ENCODE measurements at regions of chr11 and their contacts with region 1.

Region 1: DNA sequence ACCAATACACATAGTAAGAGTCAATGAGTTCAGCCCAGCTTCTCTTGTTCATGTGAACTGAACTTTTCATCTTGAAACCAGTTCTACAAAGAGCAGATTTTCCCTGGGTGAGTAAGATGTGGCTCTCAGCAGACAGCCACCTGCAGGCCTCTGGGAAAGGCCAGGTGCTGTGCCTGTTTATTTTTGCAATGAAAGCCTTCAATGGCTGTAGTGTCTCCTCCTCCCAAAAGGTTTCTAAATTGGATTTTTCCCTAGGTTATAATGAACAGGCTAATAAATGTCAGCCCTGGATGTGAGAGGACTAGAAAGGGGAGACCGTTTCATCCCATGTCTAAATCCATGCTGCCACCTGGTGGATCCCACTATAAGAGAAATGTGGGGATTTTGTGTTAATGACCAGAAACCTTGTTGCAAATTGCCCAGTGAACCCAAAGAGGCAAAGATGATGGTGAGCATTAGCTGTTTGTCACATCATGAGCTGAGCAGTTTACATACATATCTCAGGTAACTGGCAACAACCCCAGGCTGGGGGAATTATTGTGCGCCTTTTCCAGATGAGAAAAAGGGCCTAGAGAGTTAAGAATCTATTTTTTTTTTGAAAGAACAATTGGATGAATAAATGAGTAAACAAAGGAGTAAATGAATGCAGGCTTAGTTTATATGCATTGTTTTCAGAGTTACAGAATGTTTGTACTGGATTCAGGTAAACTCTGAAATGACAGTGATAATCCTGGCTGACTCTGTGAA is 12.7 kb downstream of the C11orf91 start:
- DNase-seq: no peak
- H3K4me3 ChIP-seq: no peak overlapping the region
- H3K27me3 ChIP-seq: no peaks in the 10 kb centered on the region
- CTCF ChIP-seq: peak; percentile 69

Region 2: GRCh38 chr11:33362051-33362910 is 325.6 kb before region 1 on chr11:
- CTCF ChIA-PET with region 1: interaction called, 64 read pairs
- POLR2A ChIA-PET with region 1: no interaction called
- DNase-seq: peak; percentile 14
- H3K4me3 ChIP-seq: no peak overlapping the region
- H3K27me3 ChIP-seq: no peaks in the 10 kb centered on the region
- CTCF ChIP-seq: peak; percentile 42

Region 3: GRCh38 chr11:33531743-33532181 is 156.1 kb before region 1 on chr11:
- CTCF ChIA-PET with region 1: interaction called, 17 read pairs
- POLR2A ChIA-PET with region 1: no interaction called
- DNase-seq: peak; percentile 56
- H3K4me3 ChIP-seq: no peak overlapping the region
- H3K27me3 ChIP-seq: no peaks in the 10 kb centered on the region
- CTCF ChIP-seq: no peak

Region 4: DNA sequence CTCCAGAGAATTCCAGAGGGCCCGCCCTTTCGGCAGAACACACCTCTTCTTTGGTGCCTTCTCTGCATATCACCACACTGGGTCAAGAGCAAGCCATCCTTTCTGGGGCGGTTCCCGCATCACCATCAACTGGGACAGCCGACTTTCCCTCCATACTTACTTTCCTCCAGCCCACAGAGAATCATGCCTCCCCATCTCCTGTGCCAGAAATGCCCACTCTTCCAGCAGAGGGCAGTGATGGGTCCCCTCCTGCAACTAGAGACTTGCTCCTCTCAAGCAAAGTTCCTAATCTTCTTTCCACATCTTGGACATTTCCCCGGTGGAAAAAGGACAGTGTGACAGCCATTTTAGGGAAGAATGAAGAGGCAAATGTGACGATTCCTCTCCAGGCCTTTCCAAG is 145.0 kb before region 1 on chr11:
- CTCF ChIA-PET with region 1: interaction called, 54 read pairs
- POLR2A ChIA-PET with region 1: no interaction called
- DNase-seq: no peak
- H3K4me3 ChIP-seq: no peak overlapping the region
- H3K27me3 ChIP-seq: no peaks in the 10 kb centered on the region
- CTCF ChIP-seq: peak; percentile 69